Activated T-helper 1 cell treated with anti-CD3 and anti-CD28 coated beads, Interleukin-12 subunit alpha, Interleukin-12 subunit beta, Interleukin-2, Interleukin-4 antibody, amounts not matched to agents 30 ng/mL and 10 ng/mL and 1 ng/mL, durations not matched to agents 14 hours and 24 hours and 36 hours (primary cell): ENCODE measurements at regions of chrX and their contacts with region 1.

Region 1: GRCh38 chrX:71532753-71533425 is at the start of gene OGT:
- DNase-seq: peak; percentile 88
- H3K4me3 Mint-ChIP-seq: peak within 1 kb of the TSS; percentile 95
- H3K27ac Mint-ChIP-seq: peak within 1 kb of the TSS; percentile 100
- H3K4me1 Mint-ChIP-seq: peaks cover 26% of the 10 kb centered on the region
- H3K27me3 Mint-ChIP-seq: no peaks in the 10 kb centered on the region
- total RNA-seq, gene OGT: 295 and 305 TPM in 2 replicates

Region 2: GRCh38 chrX:71118032-71118984 is 414.6 kb before region 1 on chrX and contains the start of gene MED12:
- intact Hi-C with region 1: loop called (anchors 2 kb)
- DNase-seq: peak; percentile 76
- H3K4me3 Mint-ChIP-seq: peak within 1 kb of the TSS; percentile 85
- H3K27ac Mint-ChIP-seq: peak within 1 kb of the TSS; percentile 82
- H3K4me1 Mint-ChIP-seq: peaks cover 20% of the 10 kb centered on the region
- H3K27me3 Mint-ChIP-seq: no peaks in the 10 kb centered on the region
- total RNA-seq, gene MED12: 59.9 and 65.4 TPM in 2 replicates

Region 3: DNA sequence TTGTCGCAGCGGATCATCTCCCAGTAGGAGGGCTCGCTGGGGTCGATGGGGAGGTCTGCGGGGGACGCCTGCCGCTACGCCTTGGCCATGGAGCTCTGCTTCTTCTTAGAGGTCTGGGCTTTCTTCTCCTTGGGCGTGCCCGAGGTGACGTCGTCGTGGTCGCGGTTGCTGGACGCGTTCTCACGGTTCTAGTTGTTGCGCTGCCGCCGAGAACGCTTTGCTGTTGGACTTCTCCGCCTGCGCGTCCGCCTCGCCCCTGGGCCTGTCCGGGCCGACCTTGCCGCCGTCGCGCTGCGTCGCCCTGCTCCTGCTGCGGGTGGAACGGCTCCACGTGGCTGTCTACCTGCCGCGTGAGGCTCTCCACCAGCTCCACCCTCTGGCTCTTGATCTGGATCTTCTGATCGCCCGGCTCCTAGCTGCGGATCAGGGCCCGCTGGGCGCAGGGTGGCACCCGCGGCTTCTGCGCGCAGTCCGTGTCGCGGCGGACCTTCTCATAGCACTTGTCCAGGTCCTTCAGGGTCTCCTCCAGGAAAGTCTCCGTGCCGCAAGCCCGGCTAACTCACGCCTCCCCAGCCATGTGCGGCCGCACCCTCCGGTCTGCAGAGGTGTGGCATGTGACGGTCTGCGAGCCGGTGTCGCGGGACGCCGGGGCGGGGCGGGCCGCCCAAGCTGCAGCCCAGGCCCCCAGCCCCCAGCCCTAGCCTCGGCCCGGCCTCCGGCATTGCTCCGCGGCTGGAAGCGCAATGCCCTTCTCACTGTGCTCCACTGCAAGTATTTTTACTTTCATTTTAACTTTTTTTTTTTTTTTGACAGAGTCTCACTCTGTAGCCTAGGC is 40.4 kb before region 1 on chrX:
- intact Hi-C with region 1: loop called (anchors 1 kb)
- DNase-seq: peak; percentile 31
- H3K4me3 Mint-ChIP-seq: peak overlapping the region; percentile 86
- H3K27ac Mint-ChIP-seq: peak overlapping the region; percentile 79
- H3K4me1 Mint-ChIP-seq: peaks cover 14% of the 10 kb centered on the region
- H3K27me3 Mint-ChIP-seq: no peaks in the 10 kb centered on the region

Region 4: GRCh38 chrX:71514367-71515038 is 18.4 kb before region 1 on chrX:
- intact Hi-C with region 1: loop called (anchors 1 kb)
- DNase-seq: no peak
- H3K4me3 Mint-ChIP-seq: peak overlapping the region; percentile 20
- H3K27ac Mint-ChIP-seq: peak overlapping the region; percentile 68
- H3K4me1 Mint-ChIP-seq: peaks cover 18% of the 10 kb centered on the region
- H3K27me3 Mint-ChIP-seq: peaks cover 2% of the 10 kb centered on the region

Region 5: GRCh38 chrX:71637848-71638247 is 105.0 kb after region 1 on chrX:
- intact Hi-C with region 1: loop called (anchors 5 kb)
- DNase-seq: no peak
- H3K4me3 Mint-ChIP-seq: no peak overlapping the region
- H3K27ac Mint-ChIP-seq: no peak overlapping the region
- H3K4me1 Mint-ChIP-seq: peaks cover 5% of the 10 kb centered on the region
- H3K27me3 Mint-ChIP-seq: no peaks in the 10 kb centered on the region